H1 (cell line): ENCODE measurements at regions of chr12 and their contacts with region 1.

Region 1: GRCh38 chr12:3218228-3219171 is 141.3 kb downstream of the TSPAN9 start:
- DNase-seq: no peak
- H3K4me3 ChIP-seq: no peak overlapping the region
- H3K27ac ChIP-seq: no peak overlapping the region
- H3K4me1 ChIP-seq: peaks cover 3 to 14% (median 10%) of the 10 kb centered on the region in 4 experiments
- H3K27me3 ChIP-seq: no peaks in the 10 kb centered on the region
- CTCF ChIP-seq: no peak
- EP300 ChIP-seq: no peak
- POLR2A ChIP-seq: no peak
- RAD21 ChIP-seq: no peak

Region 2: GRCh38 chr12:3236345-3237187 is 18.1 kb after region 1 on chr12:
- CTCF ChIA-PET with region 1: interaction called, 17 read pairs
- POLR2A ChIA-PET with region 1: interaction called, 3 read pairs
- DNase-seq: no peak
- H3K4me3 ChIP-seq: no peak overlapping the region
- H3K27ac ChIP-seq: no peak overlapping the region
- H3K4me1 ChIP-seq: peaks cover 3 to 12% (median 9%) of the 10 kb centered on the region in 4 experiments
- H3K27me3 ChIP-seq: no peaks in the 10 kb centered on the region
- CTCF ChIP-seq: no peak
- EP300 ChIP-seq: no peak
- POLR2A ChIP-seq: no peak
- RAD21 ChIP-seq: no peak